ENCODE measurements at regions of chr6 and their contacts with region 1.

Region 1: DNA sequence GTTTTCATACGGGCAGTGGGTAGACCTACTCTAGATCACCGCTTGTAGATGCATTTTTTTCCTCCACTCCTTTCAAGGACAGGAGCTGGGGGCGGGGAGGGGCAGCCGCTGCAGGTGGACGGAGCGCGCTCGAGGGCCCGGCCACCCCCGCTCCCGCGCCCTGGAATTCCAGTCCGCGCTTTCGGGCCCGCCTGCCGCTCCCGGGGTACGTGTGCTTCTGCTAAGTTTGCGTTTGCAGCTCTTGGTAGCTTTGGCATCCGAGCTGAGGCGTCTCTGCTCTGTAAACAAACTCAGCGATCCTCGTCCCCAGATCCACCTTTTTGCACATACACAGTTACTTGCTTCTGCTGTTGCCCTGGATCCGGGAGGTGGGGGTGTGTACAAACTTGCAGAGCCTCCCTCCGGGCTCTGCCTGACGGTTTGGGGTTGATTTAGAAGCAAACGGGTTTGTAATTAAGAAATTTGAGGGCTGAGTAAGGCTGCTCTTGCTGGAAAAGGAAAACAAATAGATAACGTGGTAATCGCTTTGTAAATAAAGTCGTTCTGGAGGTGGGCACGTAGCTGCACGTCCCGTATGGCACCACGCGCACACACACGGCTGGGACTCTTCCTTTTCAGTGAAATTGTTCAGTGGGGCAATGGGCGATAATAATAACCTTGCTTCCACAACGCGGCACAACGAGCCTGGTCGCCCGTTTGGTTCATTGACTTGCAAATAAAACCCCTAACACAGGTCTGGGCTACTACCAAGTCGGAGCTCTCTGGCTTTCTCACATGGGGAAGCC is 976 bp upstream of the CITED2 start:
- DNase-seq: peak; percentile 89
- H3K4me3 Mint-ChIP-seq: peak overlapping the region; percentile 97
- H3K27ac Mint-ChIP-seq: peak overlapping the region; percentile 98
- H3K4me1 Mint-ChIP-seq: peaks cover 31% of the 10 kb centered on the region
- H3K27me3 Mint-ChIP-seq: no peaks in the 10 kb centered on the region

Region 2: DNA sequence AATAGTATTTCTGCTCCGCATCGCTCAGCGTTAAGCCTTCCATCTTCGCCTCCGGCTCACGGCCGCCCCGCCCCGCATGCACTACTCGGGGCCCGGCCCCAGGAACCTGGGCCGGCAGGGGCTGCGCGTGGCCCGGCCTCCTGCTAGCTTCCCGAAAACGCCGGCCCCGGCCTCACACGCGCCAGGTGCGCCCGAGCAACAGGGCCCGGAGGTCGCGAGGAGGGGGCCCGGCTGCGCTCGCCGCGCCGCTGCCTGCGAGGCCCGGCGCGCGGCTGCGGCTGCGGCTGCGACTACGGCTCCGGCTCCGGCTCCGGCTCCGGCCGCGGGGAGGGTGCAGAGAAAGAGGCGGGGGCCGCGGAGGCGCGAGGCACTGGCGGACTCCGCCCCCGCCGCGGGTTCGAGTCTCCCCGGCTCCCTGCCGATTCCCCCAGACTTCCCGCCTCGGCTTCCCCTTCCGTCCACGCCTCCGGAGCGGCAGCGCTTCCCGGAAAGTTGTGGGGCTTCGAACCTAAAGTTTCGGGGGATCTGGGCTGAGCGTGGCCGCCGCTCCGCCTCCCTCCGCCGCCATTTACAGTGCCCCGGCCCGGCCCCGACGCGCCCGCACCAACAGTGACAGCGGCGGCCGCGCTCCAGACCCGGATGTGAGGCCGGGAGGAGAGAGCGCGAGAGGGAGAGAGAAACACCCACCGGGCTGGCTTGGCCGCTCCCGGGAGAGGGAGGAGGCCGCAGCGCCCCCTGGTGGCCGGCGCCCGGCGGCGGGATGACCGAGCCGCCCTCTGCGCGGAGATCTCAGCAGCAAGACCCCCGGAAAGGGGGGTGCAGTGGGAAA is 387.6 kb before region 1 on chr6 and contains the start of gene REPS1:
- CTCF ChIA-PET with region 1: interaction called, 3 read pairs
- POLR2A ChIA-PET with region 1: no interaction called
- intact Hi-C with region 1: loop called (anchors 5 kb)
- DNase-seq: peak; percentile 94
- H3K4me3 Mint-ChIP-seq: peak within 1 kb of the TSS; percentile 85
- H3K27ac Mint-ChIP-seq: peak within 1 kb of the TSS; percentile 89
- H3K4me1 Mint-ChIP-seq: peaks cover 19% of the 10 kb centered on the region
- H3K27me3 Mint-ChIP-seq: no peaks in the 10 kb centered on the region
- total RNA-seq, gene REPS1: 50.7 to 57.9 TPM

Region 3: DNA sequence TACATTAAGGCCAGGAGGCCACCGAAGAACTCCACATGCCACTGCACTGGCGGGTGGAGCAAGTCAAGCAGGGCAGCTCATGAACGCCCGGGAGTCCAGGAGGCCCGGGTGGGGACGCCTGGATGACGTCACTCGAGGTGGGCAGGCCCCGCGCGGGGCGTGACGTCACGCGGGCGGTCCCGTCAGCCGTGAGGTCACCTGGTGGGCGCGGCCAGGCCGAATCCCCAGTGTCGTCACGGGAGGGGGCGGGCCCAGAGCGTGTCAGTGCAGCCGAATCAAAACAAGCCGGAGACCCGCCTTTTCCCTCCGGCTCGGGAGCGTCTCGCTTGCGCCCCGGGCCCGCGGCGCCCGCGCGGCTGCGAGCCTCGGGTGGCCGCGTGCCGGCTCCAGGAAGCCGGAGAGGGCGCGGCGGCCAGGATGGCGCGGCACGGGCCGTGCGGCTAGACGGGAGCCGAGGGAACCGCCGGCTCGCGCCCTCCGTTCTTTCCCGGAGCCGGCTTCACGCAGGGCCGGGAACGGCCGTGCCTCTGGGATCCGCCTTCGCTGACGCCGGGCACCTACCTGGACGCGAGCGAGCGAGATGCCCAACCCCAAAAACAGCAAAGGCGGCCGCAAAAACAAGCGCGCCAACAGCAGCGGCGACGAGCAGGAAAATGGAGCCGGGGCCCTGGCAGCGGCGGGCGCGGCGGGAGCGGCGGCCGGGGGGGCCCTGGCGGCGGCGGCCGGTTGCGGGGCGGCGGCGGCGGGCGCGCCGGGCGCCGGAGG is 240.4 kb before region 1 on chr6 and contains the start of gene HECA:
- CTCF ChIA-PET with region 1: interaction called, 3 read pairs
- POLR2A ChIA-PET with region 1: interaction called, 15 read pairs
- intact Hi-C with region 1: no loop called
- DNase-seq: peak; percentile 99
- H3K4me3 Mint-ChIP-seq: peak within 1 kb of the TSS; percentile 83
- H3K27ac Mint-ChIP-seq: peak within 1 kb of the TSS; percentile 94
- H3K4me1 Mint-ChIP-seq: peaks cover 54% of the 10 kb centered on the region
- H3K27me3 Mint-ChIP-seq: no peaks in the 10 kb centered on the region
- total RNA-seq, gene HECA: 75.7 to 76.6 TPM

Region 4: DNA sequence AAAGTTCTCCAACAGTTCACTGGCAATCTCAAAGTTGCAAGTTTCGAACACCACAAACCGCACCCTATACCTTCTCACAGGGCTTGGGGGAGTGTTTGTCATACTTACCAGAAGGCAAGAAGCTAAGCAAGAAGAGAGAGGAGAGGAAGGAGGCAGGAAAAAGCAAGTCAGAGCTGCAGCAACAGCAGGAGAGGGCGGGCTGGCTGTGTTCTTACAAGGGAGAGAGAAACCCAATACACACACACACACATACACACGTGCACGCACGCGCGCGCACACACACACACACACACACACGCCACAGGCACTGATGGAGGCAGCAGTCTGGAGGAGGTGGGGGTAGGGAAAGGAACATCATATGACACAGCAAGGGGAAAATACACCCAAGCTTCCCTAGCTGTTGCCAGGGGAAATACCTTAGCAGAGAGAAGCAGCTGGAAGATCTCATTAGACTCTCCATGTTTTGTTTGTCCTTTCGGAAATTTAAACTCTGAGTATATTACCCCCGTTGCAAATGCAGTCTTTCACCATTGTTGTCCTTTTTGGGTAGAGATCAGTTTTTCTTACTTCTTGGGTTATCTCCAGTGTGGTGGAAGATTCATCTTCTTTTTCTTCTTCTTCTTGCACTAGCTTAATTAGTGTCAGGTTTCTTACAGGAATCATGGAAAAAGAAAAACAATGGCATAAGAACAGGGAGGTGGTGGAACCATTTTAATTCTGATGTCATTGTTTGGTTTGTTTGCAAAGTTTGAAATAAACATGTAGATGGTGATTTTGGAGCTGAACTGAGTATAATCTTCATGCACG is 83.4 kb before region 1 on chr6 and contains the start of gene TXLNB:
- CTCF ChIA-PET with region 1: no interaction called
- POLR2A ChIA-PET with region 1: interaction called, 12 read pairs
- intact Hi-C with region 1: loop called (anchors 1 kb)
- DNase-seq: peak; percentile 92
- H3K4me3 Mint-ChIP-seq: peak within 1 kb of the TSS; percentile 72
- H3K27ac Mint-ChIP-seq: peak within 1 kb of the TSS; percentile 95
- H3K4me1 Mint-ChIP-seq: peaks cover 56% of the 10 kb centered on the region
- H3K27me3 Mint-ChIP-seq: no peaks in the 10 kb centered on the region
- total RNA-seq, gene TXLNB: 0.17 to 0.31 TPM

Region 5: DNA sequence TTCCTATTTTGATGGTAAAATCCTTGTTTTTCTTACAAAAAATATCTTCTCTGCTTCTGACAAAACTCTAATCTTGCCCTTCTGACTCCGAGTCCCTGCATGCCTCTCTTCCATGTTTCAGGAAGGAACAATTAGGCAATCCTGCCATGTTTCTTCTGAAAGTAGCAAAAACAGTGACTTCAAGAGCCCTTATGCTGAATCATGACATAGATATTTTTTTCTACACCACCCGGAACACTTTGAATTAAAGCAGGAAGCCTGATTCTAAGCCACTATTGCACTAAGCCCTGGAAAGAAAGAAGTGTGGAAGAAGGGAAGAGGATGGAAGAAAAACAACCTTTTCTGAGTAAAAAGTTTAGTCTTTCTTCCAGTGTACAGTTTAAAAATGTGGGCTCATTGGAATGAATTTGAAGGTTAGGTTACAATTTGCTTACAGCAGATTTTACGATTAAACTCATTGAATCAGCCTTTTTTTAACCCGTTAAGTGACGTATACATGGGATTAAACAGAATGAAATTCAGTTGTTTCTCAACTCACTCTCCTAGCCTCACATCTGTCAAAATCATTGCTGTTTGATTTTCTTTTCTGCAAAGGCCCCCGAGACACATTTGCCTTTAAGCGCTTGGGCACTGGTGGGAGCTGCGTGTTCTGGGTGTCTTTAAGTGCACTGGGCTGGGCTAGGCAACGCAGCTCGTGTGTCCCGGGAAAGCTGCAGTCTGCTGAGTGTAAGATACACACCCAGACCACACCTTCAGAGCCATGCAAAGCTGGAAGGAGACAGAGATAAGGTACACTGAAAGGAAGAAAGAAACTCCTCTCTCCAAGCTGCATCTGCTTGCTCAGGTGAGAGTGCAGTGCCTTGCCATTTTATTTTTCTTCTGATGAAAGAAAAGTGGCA is 158.4 kb after region 1 on chr6:
- CTCF ChIA-PET with region 1: no interaction called
- POLR2A ChIA-PET with region 1: interaction called, 21 read pairs
- intact Hi-C with region 1: loop called (anchors 1 kb)
- DNase-seq: no peak
- H3K4me3 Mint-ChIP-seq: peak overlapping the region; percentile 55
- H3K27ac Mint-ChIP-seq: peak overlapping the region; percentile 85
- H3K4me1 Mint-ChIP-seq: peaks cover 57% of the 10 kb centered on the region
- H3K27me3 Mint-ChIP-seq: no peaks in the 10 kb centered on the region

Region 6: DNA sequence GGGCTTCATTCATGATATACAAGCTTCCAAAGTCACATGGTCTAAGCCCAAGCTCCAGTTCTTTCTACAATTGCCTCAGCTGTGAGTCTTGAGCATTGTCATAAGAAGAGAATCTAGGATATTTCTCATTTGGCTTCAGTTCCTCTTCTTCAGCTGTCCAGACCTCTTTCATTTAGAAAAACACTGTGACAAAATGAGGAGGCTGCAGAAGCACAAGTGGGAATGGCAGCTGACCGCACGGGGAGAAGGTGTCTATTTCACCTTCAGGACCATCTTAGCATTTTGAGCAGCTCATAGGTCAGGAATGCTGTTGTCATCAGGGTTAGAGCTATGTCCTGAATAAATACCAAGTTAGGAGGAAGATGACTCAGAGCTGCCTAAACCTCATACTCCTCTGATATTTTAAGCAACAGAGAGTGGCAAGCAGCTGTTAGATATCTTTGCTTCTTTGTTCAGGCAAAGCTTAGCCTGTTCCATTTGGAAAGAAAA is 389.1 kb after region 1 on chr6:
- CTCF ChIA-PET with region 1: no interaction called
- POLR2A ChIA-PET with region 1: interaction called, 3 read pairs
- intact Hi-C with region 1: loop called (anchors 5 kb)
- DNase-seq: no peak
- H3K4me3 Mint-ChIP-seq: no peak overlapping the region
- H3K27ac Mint-ChIP-seq: no peak overlapping the region
- H3K4me1 Mint-ChIP-seq: peaks cover 17% of the 10 kb centered on the region
- H3K27me3 Mint-ChIP-seq: peaks cover 4% of the 10 kb centered on the region

Region 7: GRCh38 chr6:140809694-140810101 is 1434.3 kb after region 1 on chr6:
- CTCF ChIA-PET with region 1: no interaction called
- POLR2A ChIA-PET with region 1: interaction called, 4 read pairs
- intact Hi-C with region 1: loop called (anchors 2 kb)
- DNase-seq: no peak
- H3K4me3 Mint-ChIP-seq: no peak overlapping the region
- H3K27ac Mint-ChIP-seq: no peak overlapping the region
- H3K4me1 Mint-ChIP-seq: peaks cover 7% of the 10 kb centered on the region
- H3K27me3 Mint-ChIP-seq: peaks cover 4% of the 10 kb centered on the region